PC-9 (cell line): ENCODE measurements at regions of chr9 and their contacts with region 1.

Region 1: DNA sequence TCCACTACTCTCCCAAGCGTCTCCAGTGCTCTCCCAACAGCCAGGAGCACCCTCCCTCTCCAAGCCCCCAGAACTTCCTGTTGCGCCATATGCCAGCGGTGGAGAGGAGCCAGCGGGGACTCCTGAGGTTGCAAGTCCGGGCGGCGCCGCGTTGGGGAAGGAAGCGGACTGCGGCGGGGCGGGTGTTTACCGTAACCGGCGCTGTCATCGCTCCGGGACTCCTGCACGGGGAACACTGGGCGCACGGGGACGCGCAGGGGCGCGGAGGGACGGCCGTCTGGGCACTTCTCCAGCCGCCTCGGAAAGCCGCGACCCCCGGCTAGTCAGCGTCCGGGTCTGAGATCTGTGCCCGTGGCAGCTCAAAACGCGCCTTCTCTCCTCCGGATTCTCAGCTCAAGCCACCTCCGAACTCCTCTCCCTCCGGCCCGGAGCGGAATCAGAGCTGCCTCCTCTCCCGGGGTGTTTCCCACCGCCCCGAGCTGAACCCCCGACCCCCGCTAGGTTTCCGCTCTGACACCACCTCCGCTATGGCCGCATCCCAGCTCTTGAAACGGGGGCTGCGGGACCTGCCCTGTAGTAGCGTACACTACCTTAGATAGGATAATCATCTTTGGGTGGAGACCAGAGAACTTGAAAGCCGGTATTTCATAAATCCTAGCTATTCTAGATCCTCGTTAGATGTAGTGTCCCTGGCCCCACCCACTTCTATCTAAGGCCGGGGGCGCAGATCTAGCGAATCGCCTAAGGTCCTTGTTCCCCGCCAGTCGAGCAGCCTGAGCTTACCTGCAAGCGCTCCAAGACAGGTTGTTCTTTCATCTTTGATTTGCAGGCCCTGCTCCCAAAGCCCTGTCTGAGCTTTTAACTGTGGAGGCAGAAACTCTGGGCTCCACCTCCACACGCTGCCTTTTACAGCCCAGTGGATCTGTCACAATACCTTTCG is at the start of gene TRPM6:
- DNase-seq: peak in 1 of 2 experiments; percentile 56
- H3K4me3 ChIP-seq: peak within 1 kb of the TSS; percentile 68
- H3K27ac ChIP-seq: no peak within 1 kb of the TSS
- H3K4me1 ChIP-seq: peaks cover 7% of the 10 kb centered on the region
- H3K27me3 ChIP-seq: no peaks in the 10 kb centered on the region; the same call in 1 of the 2 replicates
- CTCF ChIP-seq: no peak
- total RNA-seq, gene TRPM6: 0.08 and 0.09 TPM in 2 replicates

Region 2: DNA sequence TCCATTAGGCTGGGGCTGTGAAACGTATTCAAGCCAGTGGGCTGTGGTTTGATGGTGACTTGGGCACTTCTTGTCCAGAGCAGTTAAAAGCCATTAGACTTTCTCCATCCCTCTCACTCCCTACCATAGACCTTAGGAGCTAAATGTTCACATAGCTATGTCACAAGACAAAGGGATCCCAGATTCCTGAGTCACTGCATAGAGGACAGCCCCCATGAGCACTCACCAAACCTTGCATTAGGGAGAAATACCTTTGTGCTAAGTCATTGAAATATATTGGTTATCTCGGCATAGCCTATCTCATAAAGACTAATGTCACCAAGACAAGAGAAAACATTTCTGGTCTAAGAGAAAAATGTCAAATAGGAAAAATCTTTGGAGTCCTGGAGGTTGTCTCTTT is 103.9 kb before region 1 on chr9:
- CTCF ChIA-PET with region 1: no interaction called
- POLR2A ChIA-PET with region 1: no interaction called
- intact Hi-C with region 1: loop called (anchors 2 kb)
- DNase-seq: peak; percentile 22 to 57
- H3K4me3 ChIP-seq: no peak overlapping the region
- H3K27ac ChIP-seq: no peak overlapping the region
- H3K4me1 ChIP-seq: peaks cover 3% of the 10 kb centered on the region; the same call in 1 of the 2 replicates
- H3K27me3 ChIP-seq: no peaks in the 10 kb centered on the region
- CTCF ChIP-seq: no peak

Region 3: DNA sequence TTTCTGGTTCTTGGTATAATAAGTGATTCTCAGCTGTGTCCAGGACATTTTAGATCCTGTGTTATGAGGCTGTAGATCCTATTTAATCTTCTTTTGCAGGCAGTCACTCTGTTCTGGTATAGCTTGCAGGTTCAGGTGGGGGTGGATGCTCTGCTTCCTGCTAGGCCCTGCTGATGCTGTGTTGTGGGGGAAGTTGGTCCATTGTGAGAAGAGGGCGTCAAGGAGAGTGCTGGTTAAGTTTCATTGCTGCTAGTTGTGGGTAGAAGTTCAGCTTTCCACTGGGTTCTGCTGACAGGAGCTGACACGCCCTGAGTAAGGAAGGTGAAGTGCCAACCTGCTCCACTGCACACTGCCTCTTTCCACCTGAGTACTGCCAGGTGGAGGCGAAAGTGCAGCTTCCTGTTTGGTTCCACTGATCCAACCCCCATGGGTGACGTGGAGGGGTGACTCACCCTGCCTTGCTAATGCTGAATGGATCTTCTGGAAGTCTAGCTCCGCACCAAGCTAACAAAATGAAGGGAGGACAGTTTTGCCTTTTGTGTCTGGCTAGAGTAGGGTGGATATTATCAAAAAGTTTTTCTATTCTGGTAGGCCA is 184.3 kb after region 1 on chr9:
- CTCF ChIA-PET with region 1: no interaction called
- POLR2A ChIA-PET with region 1: no interaction called
- intact Hi-C with region 1: loop called (anchors 10 kb)
- DNase-seq: peak in 1 of 2 experiments; percentile 25
- H3K4me3 ChIP-seq: no peak overlapping the region
- H3K27ac ChIP-seq: no peak overlapping the region
- H3K4me1 ChIP-seq: no peaks in the 10 kb centered on the region; the same call in 1 of the 2 replicates
- H3K27me3 ChIP-seq: no peaks in the 10 kb centered on the region
- CTCF ChIP-seq: no peak